Right ventricle myocardium inferior (tissue), 1 donor: ENCODE measurements at regions of chr13 and their contacts with region 1.

Region 1: DNA sequence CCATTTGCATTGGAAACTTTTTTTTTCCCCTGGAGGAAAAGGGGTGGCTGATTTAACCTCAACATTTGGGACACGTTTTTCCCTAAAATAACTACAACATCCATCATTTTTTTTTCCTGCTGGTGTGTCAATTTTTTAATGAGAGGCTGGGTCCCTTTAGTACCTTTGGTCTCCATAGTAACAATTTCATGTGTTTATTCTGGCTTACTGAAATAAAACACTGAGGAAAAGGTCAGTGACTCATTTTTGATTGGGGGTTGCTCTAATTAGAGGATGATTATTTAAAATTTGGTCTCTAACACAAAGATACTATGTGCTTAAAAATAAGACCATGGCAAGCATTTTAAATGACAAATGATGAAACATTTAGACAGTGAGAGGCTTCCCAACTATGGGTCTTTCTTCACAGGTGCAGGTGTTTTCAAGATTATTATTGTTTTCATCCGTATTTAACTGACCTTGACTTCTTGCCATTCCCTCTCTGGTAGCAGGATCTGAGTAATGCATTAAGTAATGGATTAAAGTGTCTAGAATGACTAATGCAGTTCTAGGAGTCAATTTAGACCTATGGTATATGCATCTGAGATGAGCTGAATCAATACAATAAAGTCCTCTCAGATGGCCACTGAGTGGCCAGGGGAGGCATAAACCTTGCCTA is 406.4 kb downstream of the KCNRG start:
- DNase-seq: no peak
- ATAC-seq: no peak

Region 2: GRCh38 chr13:50387051-50387581 is 34.5 kb before region 1 on chr13:
- intact Hi-C with region 1: loop called (anchors 5 kb)
- DNase-seq: peak; percentile 77
- ATAC-seq: peak; percentile 94